Activated naive CD4-positive, alpha-beta T cell treated with anti-CD3 and anti-CD28 coated beads for 36 hours (primary cell): ENCODE measurements at regions of chr14 and their contacts with region 1.

Region 1: GRCh38 chr14:103562429-103563225 is at the starts of genes BAG5 and COA8:
- DNase-seq: peak; percentile 90
- H3K4me3 Mint-ChIP-seq: peak within 1 kb of the TSS; percentile 89
- H3K27ac Mint-ChIP-seq: peak within 1 kb of the TSS; percentile 91
- H3K4me1 Mint-ChIP-seq: peaks cover 65% of the 10 kb centered on the region
- H3K27me3 Mint-ChIP-seq: no peaks in the 10 kb centered on the region
- total RNA-seq, gene BAG5: 15.5 to 16.6 TPM
- total RNA-seq, gene COA8: 36.8 to 48.4 TPM

Region 2: DNA sequence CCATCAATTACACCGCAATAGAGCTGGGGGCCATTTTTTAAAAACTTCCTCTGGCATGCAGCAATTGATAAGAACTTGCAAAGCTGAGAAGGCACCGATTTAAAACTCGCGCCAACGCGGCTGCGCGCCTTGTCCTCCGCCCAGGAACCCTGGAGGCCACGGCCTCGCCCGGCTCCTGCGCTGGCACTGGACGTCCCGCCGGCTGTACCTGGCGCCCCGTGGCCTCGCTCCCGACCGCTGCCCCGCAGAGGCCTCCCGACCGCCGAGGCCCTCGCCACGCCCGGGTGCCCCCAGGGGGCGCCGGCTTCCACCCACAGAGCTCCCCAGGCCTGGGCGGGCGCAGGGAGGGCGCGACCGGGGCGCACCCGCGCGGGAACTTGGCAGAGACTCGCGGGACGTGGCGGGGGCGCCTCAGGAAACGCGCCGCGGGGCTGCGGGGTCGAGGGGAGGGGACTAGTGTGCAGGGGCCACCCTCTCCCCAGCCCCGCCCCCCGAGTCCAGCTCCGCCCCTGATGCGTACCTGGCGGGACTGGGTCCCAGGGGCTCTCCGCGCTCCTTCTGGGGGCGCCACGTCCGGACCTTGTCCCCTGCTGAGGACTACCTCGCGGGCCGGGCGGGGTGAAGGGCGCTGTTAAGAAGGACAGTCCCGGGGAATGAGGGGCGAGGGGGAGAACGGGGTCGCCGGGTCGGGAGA is 373.7 kb before region 1 on chr14:
- CTCF ChIA-PET with region 1: no interaction called
- intact Hi-C with region 1: no loop called
- DNase-seq: peak; percentile 43
- H3K4me3 Mint-ChIP-seq: no peak overlapping the region
- H3K27ac Mint-ChIP-seq: no peak overlapping the region
- H3K4me1 Mint-ChIP-seq: peaks cover 8% of the 10 kb centered on the region
- H3K27me3 Mint-ChIP-seq: peaks cover 45% of the 10 kb centered on the region

Region 3: GRCh38 chr14:103528587-103529382 is 33.8 kb before region 1 on chr14 and contains the start of gene TRMT61A:
- CTCF ChIA-PET with region 1: interaction called, 3 read pairs
- intact Hi-C with region 1: loop called (anchors 2 kb)
- DNase-seq: peak; percentile 79
- H3K4me3 Mint-ChIP-seq: peak within 1 kb of the TSS; percentile 97
- H3K27ac Mint-ChIP-seq: peak within 1 kb of the TSS; percentile 87
- H3K4me1 Mint-ChIP-seq: peaks cover 34% of the 10 kb centered on the region
- H3K27me3 Mint-ChIP-seq: peaks cover under 1% of the 10 kb centered on the region
- total RNA-seq, gene TRMT61A: 6.6 to 6.7 TPM

Region 4: GRCh38 chr14:103715052-103716000 is 152.7 kb after region 1 on chr14 and contains the starts of genes XRCC3 and ZFYVE21:
- CTCF ChIA-PET with region 1: interaction called, 3 read pairs
- intact Hi-C with region 1: loop called (anchors 2 kb)
- DNase-seq: peak; percentile 100
- H3K4me3 Mint-ChIP-seq: peak within 1 kb of the TSS; percentile 93
- H3K27ac Mint-ChIP-seq: peak within 1 kb of the TSS; percentile 86
- H3K4me1 Mint-ChIP-seq: peaks cover 45% of the 10 kb centered on the region
- H3K27me3 Mint-ChIP-seq: no peaks in the 10 kb centered on the region
- total RNA-seq, gene XRCC3: 49.0 to 50.4 TPM
- total RNA-seq, gene ZFYVE21: 9.1 to 10.4 TPM